ENCODE measurements at regions of chr6 and their contacts with region 1.

Region 1: DNA sequence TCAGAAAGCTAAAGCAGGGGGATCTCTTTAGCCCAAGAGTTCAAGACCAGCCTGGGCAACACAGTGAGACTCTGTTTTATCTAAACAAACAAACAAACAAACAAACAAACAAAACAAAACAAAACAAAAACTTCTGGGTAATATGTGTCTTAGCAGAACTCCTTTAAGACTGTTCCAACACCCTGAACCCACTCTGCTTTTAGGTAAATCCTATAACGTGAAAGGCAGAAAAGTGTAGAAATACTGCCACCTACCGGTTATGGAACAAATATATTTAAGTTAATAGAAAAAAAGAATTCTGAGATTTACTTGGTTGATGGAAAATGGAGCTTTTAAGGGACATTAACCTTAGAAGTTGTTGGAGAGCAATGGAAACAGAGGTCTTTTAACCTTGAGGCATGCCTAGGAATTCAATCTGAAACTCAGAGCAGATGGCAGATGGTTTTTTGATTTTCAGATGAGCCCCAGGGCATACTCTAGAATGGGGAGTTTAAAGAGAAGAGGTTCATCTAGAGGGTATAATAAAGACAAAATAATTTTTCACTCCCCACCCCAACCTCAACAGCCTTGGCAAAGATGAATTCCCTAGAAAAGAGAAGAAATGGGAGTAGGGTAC is 38.5 kb downstream of the SOD2 start:
- DNase-seq: peak in 1 of 2 experiments; percentile 50
- H3K4me3 ChIP-seq: no peak overlapping the region
- H3K4me3 Mint-ChIP-seq: no peak overlapping the region
- H3K27ac Mint-ChIP-seq: no peak overlapping the region
- H3K4me1 ChIP-seq: no peaks in the 10 kb centered on the region
- H3K4me1 Mint-ChIP-seq: no peaks in the 10 kb centered on the region
- H3K27me3 ChIP-seq: no peaks in the 10 kb centered on the region
- H3K27me3 Mint-ChIP-seq: peaks cover 2% of the 10 kb centered on the region
- CTCF ChIP-seq: peak; percentile 45 to 63

Region 2: DNA sequence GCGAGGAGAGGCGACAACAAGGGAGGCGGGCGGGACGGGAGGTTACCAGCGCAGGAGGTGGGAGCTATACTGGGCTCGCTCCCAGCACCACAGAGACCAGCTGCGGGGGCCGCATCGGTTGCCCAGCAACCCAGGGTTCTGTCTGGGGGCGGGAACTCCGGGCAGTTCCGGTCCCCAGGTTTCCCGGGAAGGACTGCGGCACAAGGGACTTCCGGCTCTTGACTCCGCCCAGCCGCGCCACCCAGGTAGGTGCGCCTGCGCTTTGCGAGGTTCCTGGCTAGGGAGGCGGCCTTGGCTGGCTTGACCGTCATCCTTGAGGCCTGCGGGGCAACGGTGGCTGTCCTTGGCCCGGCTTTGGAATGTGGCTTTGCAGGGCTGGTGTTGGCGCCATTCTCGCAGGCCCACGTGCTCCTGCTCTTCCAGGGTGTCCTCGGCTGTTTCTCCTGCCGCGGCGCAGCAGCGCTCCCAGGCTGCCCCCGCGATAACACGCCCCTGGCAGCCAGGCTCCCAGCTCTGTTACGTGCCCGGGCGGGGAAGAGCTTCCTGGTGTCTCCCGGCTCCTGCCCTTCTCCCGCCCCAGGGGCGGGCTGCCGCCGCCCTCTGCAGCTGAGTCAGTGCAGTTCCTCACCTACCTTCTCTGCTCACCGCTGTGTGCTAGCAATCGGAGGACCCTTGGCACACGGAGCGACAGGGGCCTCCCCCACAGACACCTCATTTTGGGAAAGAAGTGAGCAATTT is 654.8 kb before region 1 on chr6 and contains the start of gene RSPH3:
- CTCF ChIA-PET with region 1: interaction called, 12 read pairs
- POLR2A ChIA-PET with region 1: no interaction called
- intact Hi-C with region 1: no loop called
- DNase-seq: peak; percentile 97
- H3K4me3 ChIP-seq: peak within 1 kb of the TSS; percentile 85
- H3K4me3 Mint-ChIP-seq: peak within 1 kb of the TSS; percentile 99
- H3K27ac Mint-ChIP-seq: peak within 1 kb of the TSS; percentile 95
- H3K4me1 ChIP-seq: peaks cover 5% of the 10 kb centered on the region; the same call in 1 of the 2 replicates
- H3K4me1 Mint-ChIP-seq: peaks cover 11% of the 10 kb centered on the region
- H3K27me3 ChIP-seq: no peaks in the 10 kb centered on the region
- H3K27me3 Mint-ChIP-seq: no peaks in the 10 kb centered on the region
- CTCF ChIP-seq: peak in 1 of 2 experiments; percentile 31
- total RNA-seq, gene RSPH3: 3.0 and 3.4 TPM in 2 replicates

Region 3: GRCh38 chr6:159174263-159174969 is 480.2 kb before region 1 on chr6:
- CTCF ChIA-PET with region 1: interaction called, 9 read pairs
- POLR2A ChIA-PET with region 1: no interaction called
- intact Hi-C with region 1: loop called (anchors 2 kb)
- DNase-seq: peak; percentile 58 to 74
- H3K4me3 ChIP-seq: no peak overlapping the region
- H3K4me3 Mint-ChIP-seq: no peak overlapping the region
- H3K27ac Mint-ChIP-seq: no peak overlapping the region
- H3K4me1 ChIP-seq: no peaks in the 10 kb centered on the region
- H3K4me1 Mint-ChIP-seq: no peaks in the 10 kb centered on the region
- H3K27me3 ChIP-seq: 0 out of 2 replicates have a peak, but pooled peaks cover 2% of the 10 kb centered on the region
- H3K27me3 Mint-ChIP-seq: peaks cover 15% of the 10 kb centered on the region
- CTCF ChIP-seq: peak; percentile 81 to 95

Region 4: GRCh38 chr6:159252955-159253508 is 401.6 kb before region 1 on chr6:
- CTCF ChIA-PET with region 1: no interaction called
- POLR2A ChIA-PET with region 1: no interaction called
- intact Hi-C with region 1: loop called (anchors 10 kb)
- DNase-seq: peak in 1 of 2 experiments; percentile 29
- H3K4me3 ChIP-seq: no peak overlapping the region
- H3K4me3 Mint-ChIP-seq: no peak overlapping the region
- H3K27ac Mint-ChIP-seq: no peak overlapping the region
- H3K4me1 ChIP-seq: no peaks in the 10 kb centered on the region
- H3K4me1 Mint-ChIP-seq: no peaks in the 10 kb centered on the region
- H3K27me3 ChIP-seq: no peaks in the 10 kb centered on the region; the same call in 1 of the 2 replicates
- H3K27me3 Mint-ChIP-seq: peaks cover 5% of the 10 kb centered on the region
- CTCF ChIP-seq: peak; percentile 49 to 53

Region 5: GRCh38 chr6:159778542-159779103 is 124.0 kb after region 1 on chr6:
- CTCF ChIA-PET with region 1: no interaction called
- POLR2A ChIA-PET with region 1: no interaction called
- intact Hi-C with region 1: no loop called
- DNase-seq: peak in 1 of 2 experiments; percentile 13
- H3K4me3 ChIP-seq: no peak overlapping the region
- H3K4me3 Mint-ChIP-seq: no peak overlapping the region
- H3K27ac Mint-ChIP-seq: no peak overlapping the region
- H3K4me1 ChIP-seq: 0 out of 2 replicates have a peak, but pooled peaks cover 6% of the 10 kb centered on the region
- H3K4me1 Mint-ChIP-seq: peaks cover 7% of the 10 kb centered on the region
- H3K27me3 ChIP-seq: no peaks in the 10 kb centered on the region
- H3K27me3 Mint-ChIP-seq: no peaks in the 10 kb centered on the region
- CTCF ChIP-seq: no peak

Measured in Caco-2 (cell line).